ENCODE measurements at regions of chr10 and their contacts with region 1.

Region 1: GRCh38 chr10:56785292-56785691 is 424.2 kb upstream of the ZWINT start:
- DNase-seq: no peak
- H3K4me3 ChIP-seq: no peak overlapping the region
- H3K27ac ChIP-seq: no peak overlapping the region
- H3K4me1 ChIP-seq: no peaks in the 10 kb centered on the region
- H3K27me3 ChIP-seq: no peaks in the 10 kb centered on the region
- CTCF ChIP-seq: no peak

Region 2: GRCh38 chr10:56771343-56771742 is 13.9 kb before region 1 on chr10:
- CTCF ChIA-PET with region 1: interaction called, 4 read pairs
- POLR2A ChIA-PET with region 1: interaction called, 26 read pairs
- intact Hi-C with region 1: no loop called
- DNase-seq: no peak
- H3K4me3 ChIP-seq: no peak overlapping the region
- H3K27ac ChIP-seq: no peak overlapping the region
- H3K4me1 ChIP-seq: no peaks in the 10 kb centered on the region
- H3K27me3 ChIP-seq: no peaks in the 10 kb centered on the region
- CTCF ChIP-seq: no peak

Region 3: GRCh38 chr10:56844978-56845529 is 59.8 kb after region 1 on chr10:
- CTCF ChIA-PET with region 1: no interaction called
- POLR2A ChIA-PET with region 1: no interaction called
- intact Hi-C with region 1: no loop called
- DNase-seq: no peak
- H3K4me3 ChIP-seq: no peak overlapping the region
- H3K27ac ChIP-seq: no peak overlapping the region
- H3K4me1 ChIP-seq: no peaks in the 10 kb centered on the region; the same call in 1 of the 2 replicates
- H3K27me3 ChIP-seq: no peaks in the 10 kb centered on the region
- CTCF ChIP-seq: no peak